ENCODE measurements at regions of chr3 and their contacts with region 1.

Region 1: DNA sequence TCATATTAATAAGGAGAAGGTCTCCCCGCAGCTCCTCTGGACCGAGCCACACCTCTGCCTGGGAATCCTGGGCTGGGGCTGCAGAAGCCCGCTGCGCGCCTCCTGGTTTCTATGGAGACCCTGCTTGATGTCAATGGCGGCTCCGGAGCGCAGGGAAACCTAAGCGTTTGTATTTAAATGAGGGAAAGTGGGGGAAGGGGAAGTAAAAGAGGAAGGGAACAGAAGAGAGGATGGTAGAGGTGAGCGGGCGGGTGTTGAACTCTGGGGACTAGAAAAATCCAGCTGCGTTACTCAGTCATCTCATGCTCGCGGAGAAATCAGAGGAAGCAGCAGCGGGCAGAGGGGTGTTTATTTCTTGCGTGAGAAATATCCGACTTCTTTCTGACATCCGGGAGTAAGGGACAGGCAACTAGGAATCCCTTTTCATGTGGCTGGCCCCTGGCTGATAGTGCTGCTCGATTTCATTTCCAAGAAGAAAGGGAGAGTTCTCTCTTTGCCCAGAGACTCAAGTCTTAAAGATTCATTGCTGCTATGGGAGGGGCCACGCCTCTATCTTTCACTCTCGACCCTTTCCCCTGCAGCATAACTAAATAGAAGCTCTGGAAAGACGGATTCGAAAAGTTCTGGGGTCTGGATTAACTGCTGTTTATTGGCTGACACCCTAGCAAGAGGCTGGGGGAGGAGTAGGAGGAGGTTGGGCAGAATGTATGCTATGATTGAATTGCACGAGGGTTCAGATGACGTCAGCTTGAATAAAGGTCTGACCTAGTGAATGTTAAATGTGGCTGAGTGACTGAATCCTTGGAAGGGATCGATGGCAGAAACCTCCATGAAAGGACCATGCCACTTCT is 110.5 kb upstream of the GAP43 start:
- DNase-seq: peak; percentile 15
- H3K4me3 ChIP-seq: peak overlapping the region; percentile 39 to 52 (median 39)
- H3K27ac ChIP-seq: no peak overlapping the region
- H3K4me1 ChIP-seq: peaks cover 9% of the 10 kb centered on the region
- H3K27me3 ChIP-seq: no peaks in the 10 kb centered on the region
- CTCF ChIP-seq: no peak

Region 2: DNA sequence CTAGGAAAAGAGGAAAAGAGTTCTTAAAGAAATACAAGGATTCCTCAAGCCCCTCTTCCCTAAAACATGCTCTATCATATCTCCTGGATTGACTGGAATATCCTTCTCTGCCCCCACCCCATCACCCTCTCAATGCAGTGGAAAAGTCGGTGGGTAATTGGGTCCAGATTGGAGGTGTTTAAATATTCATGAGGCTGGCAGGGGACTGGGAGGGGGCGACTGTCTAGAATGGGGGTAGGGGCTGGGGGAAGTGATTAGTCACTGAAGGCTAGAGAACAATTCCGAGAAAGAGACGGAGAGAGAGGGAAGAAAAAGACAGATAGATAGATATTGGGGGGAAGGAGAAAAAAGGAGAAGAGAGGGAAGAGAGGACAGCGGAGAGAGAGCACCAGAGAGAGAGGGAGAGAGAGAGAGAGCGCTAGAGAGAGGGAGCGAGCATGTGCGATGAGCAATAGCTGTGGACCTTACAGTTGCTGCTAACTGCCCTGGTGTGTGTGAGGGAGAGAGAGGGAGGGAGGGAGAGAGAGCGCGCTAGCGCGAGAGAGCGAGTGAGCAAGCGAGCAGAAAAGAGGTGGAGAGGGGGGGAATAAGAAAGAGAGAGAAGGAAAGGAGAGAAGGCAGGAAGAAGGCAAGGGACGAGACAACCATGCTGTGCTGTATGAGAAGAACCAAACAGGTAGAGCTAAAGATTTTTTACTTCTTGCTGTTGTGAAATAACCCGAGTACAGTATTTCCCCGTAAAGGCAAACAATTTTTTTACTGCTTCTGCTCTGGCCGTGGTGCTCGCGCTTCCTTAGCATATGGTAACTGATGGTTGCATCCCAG is 110.5 kb after region 1 on chr3 and contains the start of gene GAP43:
- CTCF ChIA-PET with region 1: no interaction called
- dilution Hi-C with region 1: no loop called
- in situ Hi-C with region 1: no loop called
- intact Hi-C with region 1: loop called (anchors 10 kb)
- DNase-seq: peak; percentile 58
- H3K4me3 ChIP-seq: peak within 1 kb of the TSS; percentile 16 to 38 (median 22)
- H3K27ac ChIP-seq: no peak within 1 kb of the TSS
- H3K4me1 ChIP-seq: no peaks in the 10 kb centered on the region
- H3K27me3 ChIP-seq: peaks cover 3% of the 10 kb centered on the region
- CTCF ChIP-seq: no peak
- total RNA-seq, gene GAP43: not detected